WTC11 (cell line): ENCODE measurements at regions of chr1 and their contacts with region 1.

Region 1: GRCh38 chr1:113219377-113219776 is 146.4 kb downstream of the LRIG2 start:
- DNase-seq: peak; percentile 59
- ATAC-seq: peak; percentile 93
- H3K4me3 Mint-ChIP-seq: no peak overlapping the region
- H3K27ac Mint-ChIP-seq: no peak overlapping the region
- H3K4me1 Mint-ChIP-seq: peaks cover 23% of the 10 kb centered on the region
- H3K27me3 Mint-ChIP-seq: peaks cover 3% of the 10 kb centered on the region; the same call in 1 of the 2 replicates
- CTCF ChIP-seq: 0 out of 2 replicates have a peak, but pooled peaks have one; percentile 18

Region 2: DNA sequence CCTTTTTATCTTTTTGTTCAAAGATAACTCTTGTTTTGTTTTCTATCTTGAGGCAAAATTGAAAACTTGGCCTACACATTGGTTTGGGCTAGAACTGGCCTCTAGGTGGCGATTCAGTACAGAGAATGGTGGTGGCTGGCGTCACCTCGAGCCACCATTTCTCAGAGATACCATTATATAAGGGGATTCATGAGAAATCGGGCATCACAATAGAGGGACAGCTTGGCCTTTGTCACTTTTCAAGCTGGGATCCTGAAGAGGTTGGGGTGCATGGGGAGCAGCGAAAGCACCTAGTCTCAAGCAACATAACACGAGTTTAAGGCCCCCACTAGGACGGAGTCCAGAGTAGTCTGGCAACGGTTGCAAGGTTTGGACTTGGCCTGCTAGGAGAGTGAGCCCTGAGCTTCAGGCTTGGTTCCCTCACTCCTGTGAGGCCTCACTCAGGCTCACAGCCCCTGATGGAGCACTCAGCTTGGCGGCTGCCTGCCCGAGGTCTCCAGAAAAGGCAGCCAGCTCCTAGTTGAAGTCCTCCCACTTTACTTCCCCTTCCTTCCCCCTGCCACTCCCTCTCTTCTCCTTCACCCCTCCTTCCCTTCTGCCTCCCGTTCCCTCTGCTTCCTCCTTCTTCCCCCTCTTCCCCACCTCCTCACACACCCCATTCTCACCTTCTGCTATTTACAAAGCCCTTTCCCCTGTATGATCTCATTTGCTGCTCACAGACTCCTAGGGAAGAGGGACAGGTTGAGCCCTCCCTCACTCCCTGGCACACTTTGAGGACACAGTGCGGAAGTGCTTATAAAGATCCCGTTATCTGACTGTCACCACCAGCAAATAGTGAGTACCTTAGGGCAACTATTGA is 78.6 kb before region 1 on chr1:
- CTCF ChIA-PET with region 1: interaction called, 21 read pairs
- POLR2A ChIA-PET with region 1: no interaction called
- DNase-seq: peak; percentile 67
- ATAC-seq: peak; percentile 90
- H3K4me3 Mint-ChIP-seq: no peak overlapping the region
- H3K27ac Mint-ChIP-seq: no peak overlapping the region
- H3K4me1 Mint-ChIP-seq: peaks cover 26% of the 10 kb centered on the region
- H3K27me3 Mint-ChIP-seq: no peaks in the 10 kb centered on the region
- CTCF ChIP-seq: peak; percentile 69

Region 3: DNA sequence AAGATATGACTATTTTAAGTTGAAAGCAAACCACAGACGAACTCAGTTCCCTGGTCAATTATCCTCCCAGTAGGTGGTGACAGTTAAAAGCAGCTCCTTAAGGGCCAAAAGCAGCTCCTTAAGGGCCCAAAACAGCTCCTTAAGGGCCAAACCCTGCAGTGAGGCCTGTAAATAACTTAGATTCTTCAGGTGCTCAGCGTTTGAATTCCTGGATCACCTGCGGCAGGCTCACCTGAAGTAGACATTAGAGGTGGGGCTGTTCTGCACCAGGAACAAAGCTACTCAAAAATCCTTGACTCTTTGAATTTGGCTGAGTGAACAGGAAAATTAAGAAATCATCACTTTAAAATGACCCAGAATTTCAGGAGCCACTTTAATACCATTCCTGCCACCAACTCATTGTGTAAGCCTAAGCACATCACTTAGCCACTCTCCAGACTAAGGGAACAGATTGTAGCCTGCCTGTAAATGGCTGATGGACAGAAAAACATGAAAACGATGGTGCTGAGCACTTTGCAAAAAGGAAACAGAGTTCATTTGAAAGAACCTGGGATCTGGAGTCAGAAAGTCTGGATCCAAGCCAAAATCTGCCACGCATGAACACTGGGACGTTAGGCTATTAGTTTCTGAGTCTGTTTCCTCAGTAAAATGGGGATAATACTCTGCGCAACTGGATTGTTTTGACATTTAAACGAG is 19.5 kb before region 1 on chr1:
- CTCF ChIA-PET with region 1: interaction called, 18 read pairs
- POLR2A ChIA-PET with region 1: no interaction called
- DNase-seq: no peak
- ATAC-seq: peak; percentile 86
- H3K4me3 Mint-ChIP-seq: no peak overlapping the region
- H3K27ac Mint-ChIP-seq: peak overlapping the region; percentile 66
- H3K4me1 Mint-ChIP-seq: peaks cover 50% of the 10 kb centered on the region
- H3K27me3 Mint-ChIP-seq: no peaks in the 10 kb centered on the region
- CTCF ChIP-seq: no peak

Region 4: DNA sequence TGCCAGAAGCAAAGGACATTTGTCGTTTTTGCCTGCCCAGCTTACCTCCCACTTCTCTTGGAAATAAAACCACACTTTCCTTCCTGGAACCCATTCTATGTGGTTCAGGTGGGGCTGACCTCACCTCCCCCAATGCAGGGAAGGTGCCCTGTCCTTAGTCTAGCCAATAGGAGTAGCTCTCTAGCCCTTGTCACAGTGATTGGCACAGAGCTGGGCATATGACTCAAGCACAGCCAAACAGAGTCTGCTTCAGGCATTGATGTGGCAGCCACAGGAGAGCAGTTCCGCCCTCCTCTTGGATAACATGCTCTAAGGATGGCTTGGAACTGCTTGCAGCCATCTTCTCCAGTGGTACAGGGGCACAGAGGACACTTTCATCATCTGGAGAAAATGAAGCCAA is 12.4 kb before region 1 on chr1:
- CTCF ChIA-PET with region 1: interaction called, 21 read pairs
- POLR2A ChIA-PET with region 1: no interaction called
- DNase-seq: no peak
- ATAC-seq: peak; percentile 79
- H3K4me3 Mint-ChIP-seq: no peak overlapping the region
- H3K27ac Mint-ChIP-seq: no peak overlapping the region
- H3K4me1 Mint-ChIP-seq: peaks cover 18% of the 10 kb centered on the region
- H3K27me3 Mint-ChIP-seq: no peaks in the 10 kb centered on the region
- CTCF ChIP-seq: no peak

Region 5: DNA sequence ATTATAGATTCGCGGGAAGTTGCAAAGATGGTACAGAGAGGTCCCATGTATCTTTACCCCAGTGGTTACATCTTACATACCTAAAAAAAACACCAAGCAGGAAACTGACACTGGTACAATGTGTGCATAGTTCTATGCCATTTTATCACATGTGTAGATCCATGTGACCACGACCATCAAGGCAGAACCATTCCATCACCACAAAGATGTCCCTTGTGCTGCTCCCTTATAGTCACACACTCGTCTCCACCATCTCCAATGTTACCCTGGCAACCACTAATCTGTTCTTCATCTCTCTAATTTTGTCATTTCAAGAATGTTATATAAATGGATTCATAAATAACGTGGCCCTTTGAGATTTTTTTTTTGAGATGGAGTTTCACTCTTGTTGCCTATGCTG is 14.1 kb after region 1 on chr1:
- CTCF ChIA-PET with region 1: interaction called, 15 read pairs
- POLR2A ChIA-PET with region 1: no interaction called
- DNase-seq: no peak
- ATAC-seq: no peak
- H3K4me3 Mint-ChIP-seq: no peak overlapping the region
- H3K27ac Mint-ChIP-seq: no peak overlapping the region
- H3K4me1 Mint-ChIP-seq: peaks cover 17% of the 10 kb centered on the region
- H3K27me3 Mint-ChIP-seq: no peaks in the 10 kb centered on the region; the same call in 1 of the 2 replicates
- CTCF ChIP-seq: no peak

Region 6: GRCh38 chr1:113255720-113256347 is 36.5 kb after region 1 on chr1:
- CTCF ChIA-PET with region 1: interaction called, 10 read pairs
- POLR2A ChIA-PET with region 1: no interaction called
- DNase-seq: no peak
- ATAC-seq: peak; percentile 80
- H3K4me3 Mint-ChIP-seq: peak overlapping the region; percentile 14; the same call in 1 of the 2 replicates
- H3K27ac Mint-ChIP-seq: peak overlapping the region; percentile 84
- H3K4me1 Mint-ChIP-seq: peaks cover 51% of the 10 kb centered on the region
- H3K27me3 Mint-ChIP-seq: no peaks in the 10 kb centered on the region
- CTCF ChIP-seq: no peak